Endothelial cell of umbilical vein (primary cell): ENCODE measurements at regions of chr3 and their contacts with region 1.

Region 1: DNA sequence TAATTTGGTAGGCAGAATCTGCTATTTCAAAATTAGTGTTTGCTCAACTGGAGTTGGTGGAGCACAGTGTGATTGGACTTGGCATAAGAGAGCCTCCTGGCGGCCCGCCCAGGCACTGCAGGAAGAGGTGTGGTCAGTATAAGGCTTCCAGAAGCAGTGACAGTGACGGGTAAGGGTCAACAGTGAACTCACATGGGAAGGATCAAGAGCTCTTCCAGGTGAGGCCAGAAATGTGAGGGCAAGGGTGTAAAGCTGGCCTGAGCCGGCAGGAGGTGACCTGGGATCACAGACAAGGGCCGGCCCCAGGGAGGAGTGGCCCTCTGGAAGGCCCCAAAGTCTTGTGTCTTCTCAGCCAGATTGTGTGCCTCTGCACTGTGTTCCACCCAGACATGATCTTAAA is 93.2 kb upstream of the RNF7 start:
- DNase-seq: peak; percentile 43
- H3K4me3 ChIP-seq: no peak overlapping the region
- H3K27ac ChIP-seq: no peak overlapping the region
- H3K4me1 ChIP-seq: no peaks in the 10 kb centered on the region
- H3K27me3 ChIP-seq: no peaks in the 10 kb centered on the region
- CTCF ChIP-seq: peak; percentile 76 to 88
- POLR2A ChIP-seq: no peak

Region 2: GRCh38 chr3:141250342-141250741 is 394.6 kb before region 1 on chr3:
- CTCF ChIA-PET with region 1: no interaction called
- POLR2A ChIA-PET with region 1: no interaction called
- dilution Hi-C with region 1: no loop called
- intact Hi-C with region 1: no loop called
- DNase-seq: no peak
- H3K4me3 ChIP-seq: no peak overlapping the region
- H3K27ac ChIP-seq: no peak overlapping the region
- H3K4me1 ChIP-seq: no peaks in the 10 kb centered on the region
- H3K27me3 ChIP-seq: no peaks in the 10 kb centered on the region
- CTCF ChIP-seq: no peak
- POLR2A ChIP-seq: no peak

Region 3: GRCh38 chr3:141303481-141304223 is 341.3 kb before region 1 on chr3:
- CTCF ChIA-PET with region 1: no interaction called
- POLR2A ChIA-PET with region 1: no interaction called
- dilution Hi-C with region 1: no loop called
- intact Hi-C with region 1: loop called (anchors 10 kb)
- DNase-seq: peak; percentile 86
- H3K4me3 ChIP-seq: no peak overlapping the region
- H3K27ac ChIP-seq: no peak overlapping the region
- H3K4me1 ChIP-seq: no peaks in the 10 kb centered on the region
- H3K27me3 ChIP-seq: peaks cover 0 to 6% of the 10 kb centered on the region in 2 experiments
- CTCF ChIP-seq: peak; percentile 53 to 68
- POLR2A ChIP-seq: no peak

Region 4: DNA sequence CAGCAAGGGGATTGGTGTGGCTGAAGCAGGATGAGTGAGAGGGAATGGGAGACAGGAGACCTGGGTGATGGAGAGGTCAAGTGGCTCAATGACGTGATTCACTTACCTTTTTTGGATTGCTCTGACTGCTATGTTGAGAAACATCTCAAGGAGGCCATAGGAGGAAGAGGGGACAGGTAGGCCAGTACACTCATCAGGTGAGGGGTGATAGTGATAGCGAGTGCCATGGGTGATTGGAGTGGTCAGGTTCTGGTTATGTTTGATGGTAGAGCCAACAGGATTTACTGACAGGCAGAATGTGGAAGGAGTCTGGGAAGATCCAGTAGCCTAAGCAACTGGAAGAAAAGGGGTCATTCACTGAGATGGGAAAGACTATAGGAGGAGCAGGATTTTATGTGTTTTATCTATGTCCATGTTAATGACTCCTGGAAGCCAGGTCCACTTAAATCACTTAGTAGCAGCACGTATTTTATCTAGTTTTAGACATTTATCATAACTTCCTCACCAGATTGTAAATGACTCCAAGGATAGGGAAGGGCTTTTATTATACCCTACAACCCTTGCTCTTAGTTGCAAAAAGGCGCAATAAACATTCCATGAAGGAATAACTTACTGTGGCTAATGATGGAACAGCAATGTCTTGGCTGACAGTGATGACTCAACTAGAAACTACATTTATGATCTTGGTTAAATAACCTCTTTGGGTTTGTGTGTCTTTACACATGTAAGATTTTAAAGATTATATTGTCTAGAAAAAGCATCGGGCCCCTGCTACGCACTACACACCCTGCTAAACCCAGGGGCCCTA is 26.6 kb before region 1 on chr3:
- CTCF ChIA-PET with region 1: no interaction called
- POLR2A ChIA-PET with region 1: interaction called, 12 read pairs
- dilution Hi-C with region 1: no loop called
- intact Hi-C with region 1: no loop called
- DNase-seq: no peak
- H3K4me3 ChIP-seq: no peak overlapping the region
- H3K27ac ChIP-seq: no peak overlapping the region
- H3K4me1 ChIP-seq: no peaks in the 10 kb centered on the region
- H3K27me3 ChIP-seq: no peaks in the 10 kb centered on the region
- CTCF ChIP-seq: no peak
- POLR2A ChIP-seq: no peak

Region 5: DNA sequence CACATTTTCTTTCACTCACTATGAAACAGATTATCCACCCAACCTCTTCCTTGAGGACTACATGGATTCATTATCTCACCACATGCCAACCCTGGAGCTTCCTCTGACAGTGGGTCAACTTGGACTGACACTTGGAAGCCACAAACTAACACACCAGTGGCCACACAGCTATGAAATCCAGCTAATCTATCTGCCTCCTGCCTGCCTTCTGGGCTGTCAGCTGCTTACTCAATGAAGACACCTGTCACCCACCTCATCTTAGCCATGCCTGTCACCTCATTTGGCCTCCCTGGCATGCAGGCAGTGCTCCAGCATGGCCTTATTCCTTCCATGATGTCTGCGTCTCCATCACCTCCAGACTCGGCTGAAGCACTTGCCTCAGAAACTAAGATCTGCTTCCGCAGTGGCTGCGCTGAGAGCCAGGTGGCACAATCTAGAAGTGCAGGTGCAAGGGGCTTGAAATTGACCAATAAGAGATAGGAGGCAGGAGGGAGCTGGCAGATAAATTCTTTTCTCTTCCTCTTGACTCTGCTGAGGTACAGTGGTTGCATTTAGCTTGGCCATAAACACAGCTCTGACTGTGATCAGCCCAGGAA is 12.1 kb before region 1 on chr3:
- CTCF ChIA-PET with region 1: interaction called, 11 read pairs
- POLR2A ChIA-PET with region 1: no interaction called
- dilution Hi-C with region 1: no loop called
- intact Hi-C with region 1: no loop called
- DNase-seq: no peak
- H3K4me3 ChIP-seq: no peak overlapping the region
- H3K27ac ChIP-seq: no peak overlapping the region
- H3K4me1 ChIP-seq: no peaks in the 10 kb centered on the region
- H3K27me3 ChIP-seq: no peaks in the 10 kb centered on the region
- CTCF ChIP-seq: no peak
- POLR2A ChIP-seq: no peak

Region 6: GRCh38 chr3:141998669-141999290 is 353.8 kb after region 1 on chr3:
- CTCF ChIA-PET with region 1: no interaction called
- POLR2A ChIA-PET with region 1: no interaction called
- dilution Hi-C with region 1: no loop called
- intact Hi-C with region 1: loop called (anchors 10 kb)
- DNase-seq: peak; percentile 19
- H3K4me3 ChIP-seq: no peak overlapping the region
- H3K27ac ChIP-seq: no peak overlapping the region
- H3K4me1 ChIP-seq: no peaks in the 10 kb centered on the region
- H3K27me3 ChIP-seq: no peaks in the 10 kb centered on the region
- CTCF ChIP-seq: peak in 1 of 2 donors; percentile 8
- POLR2A ChIP-seq: no peak